ENCODE measurements at regions of chr3 and their contacts with region 1.

Region 1: DNA sequence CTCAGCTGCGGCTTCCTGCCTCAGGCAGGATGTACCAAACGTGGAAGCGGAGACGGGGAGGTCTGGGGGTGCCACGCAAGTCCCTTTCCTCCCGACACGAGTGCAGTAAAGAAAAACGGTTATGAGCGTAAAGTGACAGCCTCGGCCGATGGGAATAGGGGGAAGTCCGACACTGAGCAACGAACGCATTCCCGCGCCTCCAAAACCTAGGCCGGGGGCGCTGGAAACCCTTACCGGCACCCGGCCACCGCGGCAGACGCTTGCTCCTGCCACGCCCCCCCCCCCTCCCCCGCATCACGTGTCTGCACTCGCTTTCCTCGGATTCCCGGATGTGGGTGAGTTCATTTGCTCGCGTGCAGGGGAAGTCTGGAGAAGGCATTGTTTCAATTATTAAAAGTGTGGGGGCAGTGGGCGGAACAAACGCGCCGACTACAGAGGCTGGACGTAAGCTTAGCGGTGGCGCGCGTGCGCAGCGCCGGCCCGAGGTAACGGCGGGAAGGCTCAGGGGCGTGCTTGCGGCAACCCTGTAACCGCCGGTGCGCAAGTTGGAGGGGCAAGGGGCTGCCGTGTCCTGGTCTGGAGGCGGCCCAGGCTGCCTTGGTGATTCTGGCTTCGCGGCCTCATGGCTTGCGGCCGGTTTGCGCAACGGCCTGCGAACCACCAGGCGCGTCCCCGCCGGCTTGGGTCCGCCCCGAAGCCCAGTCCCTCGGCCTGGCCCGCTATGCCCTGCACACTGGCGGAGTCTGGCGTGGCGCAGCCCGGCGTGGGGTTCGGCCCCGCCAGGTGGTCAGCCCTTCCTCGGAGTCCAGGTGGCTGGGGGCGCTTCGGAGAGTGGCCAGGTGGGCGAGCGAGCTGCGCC is at the starts of genes ANAPC13 and CEP63:
- DNase-seq: peak; percentile 84
- ATAC-seq: peak; percentile 82
- H3K4me3 Mint-ChIP-seq: peak within 1 kb of the TSS; percentile 99
- H3K27ac Mint-ChIP-seq: peak within 1 kb of the TSS; percentile 98
- H3K4me1 Mint-ChIP-seq: peaks cover 51% of the 10 kb centered on the region
- H3K27me3 Mint-ChIP-seq: no peaks in the 10 kb centered on the region
- CTCF ChIP-seq: no peak
- total RNA-seq, gene ANAPC13: 27.5 and 31.3 TPM in 2 replicates
- total RNA-seq, gene CEP63: 21.3 and 24.6 TPM in 2 replicates

Region 2: DNA sequence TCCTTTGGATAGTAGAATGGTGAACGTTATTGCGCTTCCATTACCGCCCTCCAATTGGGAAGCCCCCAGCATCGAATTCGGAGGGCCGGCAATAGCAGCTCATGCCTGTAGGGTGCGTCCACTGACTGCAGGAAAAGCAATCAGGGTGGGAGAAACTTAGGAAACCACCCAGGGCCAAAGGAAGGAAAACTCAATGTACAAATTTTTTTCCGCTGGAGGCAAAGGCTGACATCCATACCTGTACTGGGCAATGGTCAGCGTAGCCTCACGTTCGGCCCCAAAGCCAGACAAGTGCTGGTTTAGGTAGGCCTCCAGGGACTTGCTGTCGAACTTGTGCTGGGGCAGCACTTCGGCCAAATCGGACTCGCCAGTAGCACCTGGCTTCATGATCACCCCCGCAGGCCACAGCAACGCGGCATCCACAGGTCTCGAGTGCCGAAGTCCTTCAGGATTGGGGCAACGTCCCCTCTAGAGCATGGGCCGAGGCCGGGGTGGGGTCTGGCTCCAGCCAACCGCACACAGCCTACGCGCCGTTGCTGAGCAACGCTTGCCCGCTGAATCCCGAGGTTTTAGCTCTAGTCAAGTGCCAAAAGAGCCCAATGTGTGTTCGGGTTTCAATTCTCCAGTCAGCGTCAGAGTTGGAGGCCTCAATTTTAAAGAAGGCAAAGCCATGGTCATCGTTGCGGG is 1826.4 kb before region 1 on chr3 and contains the start of gene ACAD11:
- CTCF ChIA-PET with region 1: no interaction called
- POLR2A ChIA-PET with region 1: no interaction called
- intact Hi-C with region 1: loop called (anchors 2 kb)
- DNase-seq: peak; percentile 55
- ATAC-seq: peak; percentile 74
- H3K4me3 Mint-ChIP-seq: peak within 1 kb of the TSS; percentile 97
- H3K27ac Mint-ChIP-seq: peak within 1 kb of the TSS; percentile 93
- H3K4me1 Mint-ChIP-seq: peaks cover 35% of the 10 kb centered on the region
- H3K27me3 Mint-ChIP-seq: no peaks in the 10 kb centered on the region
- CTCF ChIP-seq: no peak
- total RNA-seq, gene ACAD11: 16.4 and 24.0 TPM in 2 replicates

Region 3: GRCh38 chr3:133661454-133662277 is 824.3 kb before region 1 on chr3 and contains the start of gene TOPBP1:
- CTCF ChIA-PET with region 1: no interaction called
- POLR2A ChIA-PET with region 1: no interaction called
- intact Hi-C with region 1: loop called (anchors 2 kb)
- DNase-seq: peak; percentile 76
- ATAC-seq: peak; percentile 86
- H3K4me3 Mint-ChIP-seq: peak within 1 kb of the TSS; percentile 98
- H3K27ac Mint-ChIP-seq: peak within 1 kb of the TSS; percentile 95
- H3K4me1 Mint-ChIP-seq: peaks cover 34% of the 10 kb centered on the region
- H3K27me3 Mint-ChIP-seq: no peaks in the 10 kb centered on the region
- CTCF ChIP-seq: no peak
- total RNA-seq, gene TOPBP1: 45.8 and 49.9 TPM in 2 replicates

Region 4: GRCh38 chr3:133927540-133928066 is 558.3 kb before region 1 on chr3:
- CTCF ChIA-PET with region 1: no interaction called
- POLR2A ChIA-PET with region 1: no interaction called
- intact Hi-C with region 1: loop called (anchors 5 kb)
- DNase-seq: peak; percentile 86
- ATAC-seq: peak; percentile 98
- H3K4me3 Mint-ChIP-seq: peak overlapping the region; percentile 77
- H3K27ac Mint-ChIP-seq: no peak overlapping the region
- H3K4me1 Mint-ChIP-seq: peaks cover 9% of the 10 kb centered on the region
- H3K27me3 Mint-ChIP-seq: peaks cover 16% of the 10 kb centered on the region
- CTCF ChIP-seq: peak; percentile 23

Region 5: GRCh38 chr3:134250717-134251220 is 235.2 kb before region 1 on chr3 and contains the start of gene RYK:
- CTCF ChIA-PET with region 1: no interaction called
- POLR2A ChIA-PET with region 1: interaction called, 16 read pairs
- intact Hi-C with region 1: loop called (anchors 1 kb)
- DNase-seq: peak; percentile 86
- ATAC-seq: peak; percentile 74
- H3K4me3 Mint-ChIP-seq: peak within 1 kb of the TSS; percentile 94
- H3K27ac Mint-ChIP-seq: peak within 1 kb of the TSS; percentile 92
- H3K4me1 Mint-ChIP-seq: peaks cover 57% of the 10 kb centered on the region
- H3K27me3 Mint-ChIP-seq: no peaks in the 10 kb centered on the region
- CTCF ChIP-seq: no peak
- total RNA-seq, gene RYK: 34.0 and 38.8 TPM in 2 replicates

Region 6: DNA sequence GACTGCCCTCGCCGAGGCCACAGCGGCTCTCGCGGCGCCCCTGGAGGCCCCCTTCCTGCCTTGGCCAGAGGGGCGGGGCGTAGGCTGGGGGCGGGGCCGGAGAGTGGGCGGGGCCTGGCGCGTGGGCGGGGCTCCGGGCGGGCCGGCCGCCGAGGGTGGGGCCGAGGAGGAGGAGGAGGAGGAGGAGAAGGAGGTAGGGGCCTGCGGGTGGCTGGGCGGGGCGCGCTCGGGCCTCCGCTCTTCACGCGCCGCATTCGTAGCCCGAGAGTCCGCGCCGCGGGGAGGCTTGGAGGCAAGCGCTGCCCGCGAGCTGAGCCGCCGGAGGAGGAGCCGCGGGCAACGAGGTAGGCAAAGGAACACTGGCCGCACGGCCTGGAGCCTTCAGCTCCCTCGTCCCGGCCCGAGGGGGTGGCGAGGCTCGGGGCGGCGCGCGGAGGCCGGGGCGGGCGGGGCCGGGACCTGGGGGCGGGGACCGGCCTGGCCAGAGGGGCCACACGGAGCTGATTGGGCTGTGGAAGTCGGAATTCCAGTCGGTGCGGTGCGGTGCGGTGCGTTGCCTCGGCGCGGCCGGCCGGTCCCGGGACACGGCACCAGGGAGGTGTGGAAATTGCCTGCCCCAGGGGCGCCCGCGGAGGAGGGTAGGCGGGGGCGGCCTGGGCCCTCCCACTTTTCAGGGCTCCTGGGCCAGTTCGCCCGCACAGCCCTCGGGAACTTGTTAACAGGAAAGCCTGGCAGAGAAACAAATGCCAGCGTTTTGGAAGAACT is 1479.7 kb after region 1 on chr3 and contains the start of gene PPP2R3A:
- CTCF ChIA-PET with region 1: no interaction called
- POLR2A ChIA-PET with region 1: no interaction called
- intact Hi-C with region 1: loop called (anchors 5 kb)
- DNase-seq: peak; percentile 54
- ATAC-seq: peak; percentile 90
- H3K4me3 Mint-ChIP-seq: peak within 1 kb of the TSS; percentile 75
- H3K27ac Mint-ChIP-seq: no peak within 1 kb of the TSS
- H3K4me1 Mint-ChIP-seq: peaks cover 9% of the 10 kb centered on the region
- H3K27me3 Mint-ChIP-seq: peaks cover 30% of the 10 kb centered on the region
- CTCF ChIP-seq: no peak
- total RNA-seq, gene PPP2R3A: 0.05 and 0.11 TPM in 2 replicates

Region 7: DNA sequence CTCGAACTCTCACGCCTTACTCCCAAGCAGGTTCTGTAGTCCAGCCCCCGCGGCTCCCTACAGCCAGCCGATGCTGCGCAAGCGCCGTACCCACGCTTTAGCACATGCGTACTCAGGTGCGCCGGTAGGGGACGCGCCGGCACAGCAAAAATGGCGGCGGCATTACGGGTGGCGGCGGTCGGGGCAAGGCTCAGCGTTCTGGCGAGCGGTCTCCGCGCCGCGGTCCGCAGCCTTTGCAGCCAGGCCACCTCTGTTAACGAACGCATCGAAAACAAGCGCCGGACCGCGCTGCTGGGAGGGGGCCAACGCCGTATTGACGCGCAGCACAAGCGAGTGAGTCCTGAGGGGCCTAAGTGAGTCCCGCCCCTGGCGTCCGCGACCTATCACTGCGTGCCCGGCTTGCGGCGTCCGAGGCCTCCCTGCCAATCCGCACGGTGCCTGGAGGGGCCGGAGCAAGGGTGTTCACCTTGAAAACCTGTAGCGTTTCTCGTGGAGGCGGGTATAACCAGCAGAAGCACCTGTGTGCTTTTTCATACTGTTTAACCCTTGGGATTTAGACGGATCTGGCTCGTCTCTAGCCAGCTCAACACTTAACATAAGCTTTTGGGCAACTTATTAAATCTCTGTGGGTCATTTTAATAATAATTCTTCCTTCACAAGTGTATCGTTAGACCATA is 1764.4 kb after region 1 on chr3 and contains the start of gene PCCB:
- CTCF ChIA-PET with region 1: no interaction called
- POLR2A ChIA-PET with region 1: no interaction called
- intact Hi-C with region 1: loop called (anchors 5 kb)
- DNase-seq: peak; percentile 88
- ATAC-seq: peak; percentile 96
- H3K4me3 Mint-ChIP-seq: peak within 1 kb of the TSS; percentile 92
- H3K27ac Mint-ChIP-seq: peak within 1 kb of the TSS; percentile 95
- H3K4me1 Mint-ChIP-seq: peaks cover 23% of the 10 kb centered on the region
- H3K27me3 Mint-ChIP-seq: no peaks in the 10 kb centered on the region
- CTCF ChIP-seq: no peak
- total RNA-seq, gene PCCB: 31.2 and 31.8 TPM in 2 replicates

Measured in activated B cell treated with CpG ODN at 0.5 μM for 24 hours (primary cell).